ENCODE measurements at regions of chr1 and their contacts with region 1.

Region 1: GRCh38 chr1:3283849-3284248 is 170.6 kb upstream of the ARHGEF16 start:
- DNase-seq: peak; percentile 45
- H3K4me3 Mint-ChIP-seq: no peak overlapping the region
- H3K27ac Mint-ChIP-seq: no peak overlapping the region
- H3K4me1 Mint-ChIP-seq: no peaks in the 10 kb centered on the region
- H3K27me3 Mint-ChIP-seq: peaks cover 3% of the 10 kb centered on the region

Region 2: DNA sequence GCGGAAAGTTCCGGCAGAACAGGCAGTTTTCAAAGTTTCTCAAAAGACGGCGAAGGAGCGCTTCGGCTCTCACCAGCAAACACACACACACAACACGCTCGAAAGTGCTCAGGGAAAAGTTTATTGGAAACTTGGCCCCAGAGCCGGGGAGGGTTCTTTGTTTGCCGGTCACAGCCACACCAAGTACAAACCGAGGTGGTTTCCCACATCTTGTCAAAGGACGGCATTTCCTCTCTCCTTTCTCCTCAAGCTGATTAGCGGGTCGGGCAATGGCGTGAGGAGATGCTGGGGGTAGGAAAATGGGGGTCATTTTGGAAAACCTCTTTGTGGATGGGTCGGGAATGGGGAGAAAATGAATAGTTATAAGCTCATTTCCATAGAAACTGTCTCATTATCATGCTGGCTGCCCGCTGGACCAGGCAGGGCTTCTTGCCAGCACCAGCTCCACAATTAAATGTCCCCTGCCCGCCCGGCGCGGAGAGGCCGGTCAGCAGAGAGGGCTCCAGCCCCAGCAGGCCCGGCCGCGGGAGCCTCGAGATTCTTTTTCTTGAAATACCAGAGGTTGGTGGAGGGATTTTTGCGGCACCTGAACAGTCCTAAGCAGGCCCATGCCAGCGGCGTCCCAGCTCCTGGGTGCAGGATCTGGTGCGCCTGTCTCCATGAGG is 122.5 kb before region 1 on chr1:
- CTCF ChIA-PET with region 1: no interaction called
- intact Hi-C with region 1: loop called (anchors 10 kb)
- DNase-seq: peak; percentile 33
- H3K4me3 Mint-ChIP-seq: peak overlapping the region; percentile 17
- H3K27ac Mint-ChIP-seq: peak overlapping the region; percentile 19
- H3K4me1 Mint-ChIP-seq: peaks cover 8% of the 10 kb centered on the region
- H3K27me3 Mint-ChIP-seq: peaks cover 2% of the 10 kb centered on the region

Region 3: DNA sequence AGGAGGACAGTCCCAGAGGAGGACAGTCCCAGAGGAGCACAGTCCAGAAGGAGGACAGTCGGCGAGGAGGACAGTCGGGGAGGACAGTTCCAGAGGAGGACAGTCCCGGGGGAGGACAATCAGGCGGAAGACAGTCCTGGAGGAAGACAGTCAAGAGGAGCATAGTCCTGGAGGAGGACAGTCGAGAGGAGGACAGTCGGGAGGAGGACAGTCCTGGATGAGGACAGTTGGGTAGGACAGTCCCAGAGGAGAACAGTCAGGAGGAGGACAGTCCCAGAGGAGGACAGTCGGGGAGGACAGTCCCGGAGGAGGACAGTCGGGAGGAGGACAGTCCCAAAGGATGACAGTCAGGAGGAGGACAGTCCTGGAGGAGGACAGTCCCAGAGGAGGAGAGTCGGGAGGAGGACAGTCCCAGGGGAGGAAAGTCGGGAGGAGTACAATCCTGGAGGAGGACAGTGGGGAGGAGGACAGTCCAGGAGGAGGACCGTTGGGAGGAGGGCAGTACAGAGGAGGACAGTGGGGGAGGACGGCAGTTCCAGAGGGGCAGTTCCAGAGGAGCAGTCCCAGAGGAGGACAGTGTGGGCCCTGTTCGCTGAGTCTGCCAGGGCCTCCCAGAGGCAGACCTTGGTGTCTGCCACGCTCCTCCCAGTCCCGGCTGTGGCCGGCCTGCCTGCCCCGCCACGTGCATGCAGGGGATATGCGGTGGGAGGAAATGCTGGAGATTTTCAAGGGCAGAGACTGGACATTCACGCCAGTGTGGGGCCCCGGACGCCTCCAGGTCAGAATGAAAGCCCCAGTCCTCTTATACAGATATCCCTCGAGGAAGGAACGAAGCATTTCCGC is 13.2 kb before region 1 on chr1:
- CTCF ChIA-PET with region 1: no interaction called
- intact Hi-C with region 1: no loop called
- DNase-seq: no peak
- H3K4me3 Mint-ChIP-seq: no peak overlapping the region
- H3K27ac Mint-ChIP-seq: no peak overlapping the region
- H3K4me1 Mint-ChIP-seq: no peaks in the 10 kb centered on the region
- H3K27me3 Mint-ChIP-seq: no peaks in the 10 kb centered on the region

Region 4: GRCh38 chr1:3695326-3696217 is 411.7 kb after region 1 on chr1:
- CTCF ChIA-PET with region 1: no interaction called
- intact Hi-C with region 1: no loop called
- DNase-seq: peak; percentile 38
- H3K4me3 Mint-ChIP-seq: no peak overlapping the region
- H3K27ac Mint-ChIP-seq: no peak overlapping the region
- H3K4me1 Mint-ChIP-seq: peaks cover 4% of the 10 kb centered on the region
- H3K27me3 Mint-ChIP-seq: peaks cover 6% of the 10 kb centered on the region

Measured in activated naive CD4-positive, alpha-beta T cell treated with anti-CD3 and anti-CD28 coated beads for 36 hours (primary cell).